A673 (cell line): ENCODE measurements at regions of chr12 and their contacts with region 1.

Region 1: GRCh38 chr12:73935817-73936216 is 601.8 kb upstream of the ATXN7L3B start:
- DNase-seq: peak; percentile 12
- H3K4me3 ChIP-seq: no peak overlapping the region
- H3K27ac ChIP-seq: no peak overlapping the region
- H3K4me1 ChIP-seq: no peaks in the 10 kb centered on the region
- H3K27me3 ChIP-seq: no peaks in the 10 kb centered on the region
- CTCF ChIP-seq: peak; percentile 59

Region 2: GRCh38 chr12:74537707-74538385 is 602.0 kb after region 1 on chr12 and contains the start of gene ATXN7L3B:
- CTCF ChIA-PET with region 1: no interaction called
- POLR2A ChIA-PET with region 1: no interaction called
- intact Hi-C with region 1: loop called (anchors 10 kb)
- DNase-seq: peak; percentile 98
- H3K4me3 ChIP-seq: peak within 1 kb of the TSS; percentile 88
- H3K27ac ChIP-seq: peak within 1 kb of the TSS; percentile 95
- H3K4me1 ChIP-seq: peaks cover 16% of the 10 kb centered on the region
- H3K27me3 ChIP-seq: no peaks in the 10 kb centered on the region
- CTCF ChIP-seq: no peak
- total RNA-seq, gene ATXN7L3B: 42.2 and 43.7 TPM in 2 replicates